Body of pancreas (tissue), 4 donors: ENCODE measurements at regions of chr1 and their contacts with region 1.

Region 1: DNA sequence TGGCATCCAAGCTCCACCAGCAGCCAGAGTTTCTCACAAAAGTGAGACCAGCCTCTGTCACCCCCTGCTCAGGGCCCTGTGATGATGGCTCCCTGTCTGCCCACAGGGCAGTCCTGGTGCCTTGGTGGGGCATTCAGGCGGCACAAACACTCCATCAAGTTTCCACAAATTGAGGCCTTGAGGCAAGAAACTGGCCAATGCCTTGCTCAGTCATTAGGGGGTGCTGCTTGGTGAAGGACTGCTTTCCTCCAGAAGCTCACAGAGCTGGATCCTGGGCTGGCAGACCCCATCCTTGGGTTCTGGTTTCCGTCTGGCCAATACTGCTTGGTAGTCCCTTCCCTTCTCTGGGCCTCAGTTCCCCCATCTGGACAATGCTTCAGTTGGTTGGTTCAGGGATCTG is 12.5 kb upstream of the AHDC1 start:
- DNase-seq: no peak
- ATAC-seq: peak; percentile 7
- H3K4me3 ChIP-seq: no peak overlapping the region
- H3K27ac ChIP-seq: no peak overlapping the region
- H3K4me1 ChIP-seq: peaks cover 3% of the 10 kb centered on the region
- H3K27me3 ChIP-seq: no peaks in the 10 kb centered on the region
- CTCF ChIP-seq: no peak
- POLR2A ChIP-seq: no peak

Region 2: GRCh38 chr1:27416387-27417111 is 199.9 kb before region 1 on chr1:
- intact Hi-C with region 1: loop called (anchors 10 kb)
- DNase-seq: peak in 2 of 4 donors; percentile 45 to 64
- ATAC-seq: no peak
- H3K4me3 ChIP-seq: no peak overlapping the region
- H3K27ac ChIP-seq: no peak overlapping the region
- H3K4me1 ChIP-seq: peaks cover 17% of the 10 kb centered on the region
- H3K27me3 ChIP-seq: no peaks in the 10 kb centered on the region
- CTCF ChIP-seq: peak in 6 of 7 experiments; percentile 20 to 55 (median 50)
- POLR2A ChIP-seq: no peak

Region 3: GRCh38 chr1:27772933-27773825 is 156.7 kb after region 1 on chr1 and contains the start of gene STX12:
- intact Hi-C with region 1: no loop called
- DNase-seq: peak; percentile 97 to 99 (median 98)
- ATAC-seq: peak; percentile 99
- H3K4me3 ChIP-seq: peak within 1 kb of the TSS; percentile 47 to 52
- H3K27ac ChIP-seq: peak within 1 kb of the TSS; percentile 65 to 94 (median 86)
- H3K4me1 ChIP-seq: peaks cover 11% of the 10 kb centered on the region
- H3K27me3 ChIP-seq: no peaks in the 10 kb centered on the region
- CTCF ChIP-seq: peak in 1 of 7 experiments; percentile 2
- POLR2A ChIP-seq: peak; percentile 83 to 94 (median 93)
- total RNA-seq, gene STX12: 22.6 to 26.7 TPM